ENCODE measurements at regions of chr20 and their contacts with region 1.

Region 1: GRCh38 chr20:61219021-61219431 is 33.0 kb upstream of the CDH4 start:
- DNase-seq: no peak
- ATAC-seq: no peak
- H3K4me3 ChIP-seq: no peak overlapping the region
- H3K27ac ChIP-seq: no peak overlapping the region
- H3K4me1 ChIP-seq: no peaks in the 10 kb centered on the region
- H3K27me3 ChIP-seq: no peaks in the 10 kb centered on the region
- CTCF ChIP-seq: no peak
- EP300 ChIP-seq: no peak
- POLR2A ChIP-seq: no peak
- RAD21 ChIP-seq: no peak

Region 2: DNA sequence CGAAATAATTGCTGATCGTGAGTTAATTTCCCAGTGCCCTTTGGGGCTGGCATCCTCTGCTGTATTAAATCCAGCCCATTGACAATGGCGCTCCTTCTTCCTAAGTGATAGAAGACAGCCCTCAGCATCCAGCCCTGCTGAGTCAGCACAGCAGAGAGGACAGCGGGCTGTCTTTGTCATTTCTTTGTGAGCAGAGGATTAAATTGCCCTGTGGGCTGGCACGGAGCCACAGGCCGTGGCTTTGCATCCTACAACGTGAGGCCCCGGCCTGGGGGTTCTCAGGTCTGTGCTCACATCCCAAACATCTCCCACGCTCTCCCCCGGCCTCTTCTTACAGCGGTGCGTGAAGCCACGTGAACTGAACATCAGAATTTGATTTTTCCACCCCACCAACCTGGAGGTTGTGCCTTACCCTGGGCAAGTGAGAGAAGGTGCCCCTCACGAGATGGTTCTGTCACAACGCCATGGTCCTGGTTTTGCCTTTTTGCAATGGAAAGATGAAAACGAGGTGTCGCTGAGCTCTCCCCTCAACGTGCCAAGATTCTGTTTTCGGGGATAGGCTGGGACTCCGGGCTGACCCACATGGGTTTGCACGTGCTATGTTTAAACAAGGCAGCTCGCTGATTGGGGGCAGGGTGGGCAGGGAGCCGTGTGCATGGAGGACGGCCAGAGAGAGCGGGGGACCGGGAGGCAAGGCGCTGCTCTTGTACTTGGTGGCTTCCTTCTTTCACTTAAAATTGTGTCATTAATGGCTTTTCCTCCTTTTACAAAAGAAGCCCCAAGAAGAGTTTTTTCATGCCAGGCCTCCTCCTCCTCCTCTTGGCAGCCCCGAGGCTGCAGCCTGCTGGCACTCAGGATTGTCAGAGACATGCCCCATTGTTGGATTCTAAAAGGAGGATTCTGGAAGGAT is 52.5 kb after region 1 on chr20:
- CTCF ChIA-PET with region 1: no interaction called
- POLR2A ChIA-PET with region 1: no interaction called
- RAD21 ChIA-PET with region 1: no interaction called
- SMC1A ChIA-PET with region 1: no interaction called
- in situ Hi-C with region 1: loop called (anchors 10 kb)
- intact Hi-C with region 1: no loop called
- DNase-seq: no peak
- ATAC-seq: no peak
- H3K4me3 ChIP-seq: no peak overlapping the region
- H3K27ac ChIP-seq: no peak overlapping the region
- H3K4me1 ChIP-seq: no peaks in the 10 kb centered on the region
- H3K27me3 ChIP-seq: no peaks in the 10 kb centered on the region
- CTCF ChIP-seq: no peak
- EP300 ChIP-seq: no peak
- POLR2A ChIP-seq: no peak
- RAD21 ChIP-seq: no peak

Region 3: DNA sequence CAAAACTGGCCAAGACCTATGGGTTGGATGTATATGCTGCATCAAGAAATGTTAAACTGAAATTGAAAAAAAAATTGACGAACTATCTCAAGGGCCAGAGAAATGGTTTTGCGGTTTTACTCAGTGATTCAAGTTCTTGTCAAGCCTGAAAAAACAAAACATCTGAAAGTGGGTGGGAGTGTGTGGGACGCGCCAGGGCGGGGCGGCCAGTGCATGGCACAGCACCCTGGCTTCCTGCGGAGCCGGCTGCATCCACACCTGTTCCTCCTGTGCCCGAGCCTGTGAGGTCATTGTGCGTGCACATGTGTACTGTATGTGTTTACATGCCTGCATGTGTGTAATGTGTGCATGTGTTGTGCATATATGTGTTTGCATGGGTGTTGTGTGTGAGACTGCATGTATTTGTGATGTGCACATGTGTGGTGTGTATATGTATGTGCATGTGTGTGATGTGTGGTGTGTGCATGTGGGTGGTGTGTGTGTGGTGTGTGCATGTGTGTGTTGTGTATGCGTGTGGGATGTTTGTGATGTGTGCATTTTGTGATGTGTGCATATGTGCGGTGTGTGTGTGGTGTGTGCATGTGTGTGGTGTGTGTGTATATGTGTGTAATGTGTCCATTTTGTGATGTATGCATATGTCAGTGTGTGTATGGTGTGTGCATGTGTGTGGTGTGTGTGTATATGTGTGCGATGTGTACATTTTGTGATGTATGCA is 92.8 kb after region 1 on chr20:
- CTCF ChIA-PET with region 1: no interaction called
- POLR2A ChIA-PET with region 1: no interaction called
- RAD21 ChIA-PET with region 1: no interaction called
- SMC1A ChIA-PET with region 1: no interaction called
- in situ Hi-C with region 1: loop called (anchors 10 kb)
- intact Hi-C with region 1: no loop called
- DNase-seq: no peak
- ATAC-seq: no peak
- H3K4me3 ChIP-seq: no peak overlapping the region
- H3K27ac ChIP-seq: no peak overlapping the region
- H3K4me1 ChIP-seq: no peaks in the 10 kb centered on the region
- H3K27me3 ChIP-seq: no peaks in the 10 kb centered on the region
- CTCF ChIP-seq: no peak
- EP300 ChIP-seq: no peak
- POLR2A ChIP-seq: no peak
- RAD21 ChIP-seq: no peak

Measured in GM12878 (cell line).